AG04449 (cell line): ENCODE measurements at regions of chr16 and their contacts with region 1.

Region 1: DNA sequence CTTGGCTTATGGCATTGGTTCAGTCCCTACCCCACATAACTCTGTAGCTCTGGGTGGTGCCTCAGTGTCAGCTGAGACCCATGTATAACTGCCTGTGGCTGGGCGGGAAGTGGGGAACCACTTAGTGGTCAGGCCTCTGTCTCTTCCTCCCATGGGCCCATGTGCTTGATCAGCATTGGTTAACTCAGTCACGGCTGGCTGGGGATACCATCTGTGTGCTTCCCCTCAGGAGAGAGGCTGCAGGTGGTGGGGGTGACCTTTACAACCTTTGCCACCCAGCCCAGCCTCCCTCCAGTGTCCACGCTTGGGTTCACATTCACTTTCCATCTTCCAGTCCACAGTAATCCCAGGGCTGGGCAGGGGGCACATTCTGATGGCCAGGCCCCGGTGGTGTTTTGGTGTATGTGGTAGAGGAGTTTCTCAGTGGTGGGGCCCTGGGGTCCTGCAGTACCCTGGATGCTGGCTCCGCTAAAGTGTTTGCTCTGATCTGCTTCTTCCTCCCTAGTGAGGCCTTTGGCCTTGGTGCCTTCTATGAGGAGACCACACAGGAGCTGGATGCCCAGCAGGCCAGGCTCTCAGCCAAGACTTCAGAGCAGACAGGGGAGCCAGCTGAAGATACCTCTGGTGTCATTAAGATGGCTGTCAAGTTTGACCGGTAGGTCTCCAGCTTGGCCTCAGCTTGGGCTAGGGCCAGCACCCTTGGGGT is 10.2 kb upstream of the NFATC3 start:
- DNase-seq: no peak
- H3K4me3 ChIP-seq: no peak overlapping the region
- CTCF ChIP-seq: no peak

Region 2: DNA sequence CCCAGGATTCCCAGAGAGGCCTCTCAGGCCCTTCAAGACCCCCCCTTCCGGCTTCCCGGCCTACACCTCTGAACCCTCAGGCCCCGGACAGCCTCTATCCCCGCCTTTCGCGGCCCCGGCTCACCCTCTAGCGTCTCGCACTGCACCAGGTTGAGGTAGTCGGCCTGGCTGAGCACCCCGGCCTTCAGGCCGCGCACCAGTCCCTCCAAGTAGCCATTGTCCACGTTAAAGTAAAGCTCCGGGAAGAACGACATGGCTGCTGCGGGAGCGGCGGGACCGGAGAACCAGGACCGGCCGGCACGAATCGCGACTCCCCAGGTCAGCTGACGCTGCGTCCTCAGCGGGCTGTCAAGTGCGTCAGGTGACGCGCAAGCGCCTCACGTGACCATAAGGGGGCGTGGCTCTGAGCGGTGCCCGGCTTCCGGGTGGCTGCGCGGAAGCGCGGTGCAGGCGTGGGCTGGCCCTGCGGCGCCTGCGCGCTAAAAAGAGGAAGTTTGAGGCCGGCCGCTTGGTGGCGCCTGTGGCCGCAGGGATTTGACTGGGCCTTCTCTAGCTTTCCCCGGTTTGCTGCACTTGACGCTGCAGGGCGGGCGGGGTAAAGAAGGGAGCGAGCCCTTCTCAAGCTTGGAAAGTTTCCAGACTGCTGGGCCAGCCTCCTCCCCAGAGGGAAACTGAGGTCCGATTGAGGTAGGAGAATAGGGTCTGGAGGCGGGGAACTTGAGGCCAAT is 594.0 kb before region 1 on chr16 and contains the start of gene ATP6V0D1:
- CTCF ChIA-PET with region 1: no interaction called
- POLR2A ChIA-PET with region 1: no interaction called
- DNase-seq: peak; percentile 76
- H3K4me3 ChIP-seq: peak within 1 kb of the TSS; percentile 98
- CTCF ChIP-seq: peak; percentile 90

Region 3: DNA sequence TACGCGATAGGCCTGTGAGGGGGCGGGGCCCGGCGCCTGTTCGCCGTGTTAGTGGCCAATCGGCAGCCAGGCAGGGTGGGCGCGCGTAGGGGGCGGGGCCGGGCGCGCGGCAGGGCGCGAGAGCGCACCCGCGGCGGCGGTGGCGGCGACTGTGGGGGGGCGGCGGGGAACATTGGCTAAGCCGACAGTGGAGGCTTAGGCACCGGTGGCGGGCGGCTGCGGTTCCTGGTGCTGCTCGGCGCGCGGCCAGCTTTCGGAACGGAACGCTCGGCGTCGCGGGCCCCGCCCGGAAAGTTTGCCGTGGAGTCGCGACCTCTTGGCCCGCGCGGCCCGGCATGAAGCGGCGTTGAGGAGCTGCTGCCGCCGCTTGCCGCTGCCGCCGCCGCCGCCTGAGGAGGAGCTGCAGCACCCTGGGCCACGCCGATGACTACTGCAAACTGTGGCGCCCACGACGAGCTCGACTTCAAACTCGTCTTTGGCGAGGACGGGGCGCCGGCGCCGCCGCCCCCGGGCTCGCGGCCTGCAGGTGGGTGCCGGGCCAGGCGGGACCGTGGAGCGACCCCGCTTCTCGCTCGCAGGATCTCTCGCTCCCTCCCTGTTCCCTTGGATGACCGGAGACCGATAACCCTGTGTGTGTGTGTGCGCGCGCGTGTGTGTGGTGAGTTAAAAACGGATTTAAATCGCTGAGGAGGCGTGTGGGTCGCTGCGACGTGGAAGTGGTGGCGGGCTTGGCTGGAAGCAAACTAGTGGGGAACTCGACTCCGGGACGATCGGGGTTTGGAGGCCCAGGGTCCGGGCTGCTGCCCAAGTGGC is 10.5 kb after region 1 on chr16 and contains the start of gene NFATC3:
- CTCF ChIA-PET with region 1: interaction called, 28 read pairs
- POLR2A ChIA-PET with region 1: interaction called, 5 read pairs
- DNase-seq: peak; percentile 61
- H3K4me3 ChIP-seq: peak within 1 kb of the TSS; percentile 83
- CTCF ChIP-seq: peak; percentile 15